ENCODE measurements at regions of chr17 and their contacts with region 1.

Region 1: GRCh38 chr17:38557836-38558727 is 47.7 kb downstream of the SRCIN1 start:
- DNase-seq: peak; percentile 96
- ATAC-seq: peak; percentile 72
- H3K4me3 Mint-ChIP-seq: peak overlapping the region; percentile 90
- H3K27ac Mint-ChIP-seq: no peak overlapping the region; the same call in 1 of the 2 replicates
- H3K4me1 Mint-ChIP-seq: peaks cover 37% of the 10 kb centered on the region
- H3K27me3 Mint-ChIP-seq: peaks cover 58% of the 10 kb centered on the region
- CTCF ChIP-seq: peak; percentile 57; the same call in 1 of the 2 replicates

Region 2: GRCh38 chr17:38454516-38454915 is 103.6 kb before region 1 on chr17:
- CTCF ChIA-PET with region 1: interaction called, 18 read pairs
- POLR2A ChIA-PET with region 1: interaction called, 4 read pairs
- DNase-seq: no peak
- ATAC-seq: no peak
- H3K4me3 Mint-ChIP-seq: peak overlapping the region; percentile 62
- H3K27ac Mint-ChIP-seq: peak overlapping the region; percentile 84
- H3K4me1 Mint-ChIP-seq: peaks cover 65% of the 10 kb centered on the region
- H3K27me3 Mint-ChIP-seq: 0 out of 2 replicates have a peak, but pooled peaks cover 2% of the 10 kb centered on the region
- CTCF ChIP-seq: no peak

Region 3: DNA sequence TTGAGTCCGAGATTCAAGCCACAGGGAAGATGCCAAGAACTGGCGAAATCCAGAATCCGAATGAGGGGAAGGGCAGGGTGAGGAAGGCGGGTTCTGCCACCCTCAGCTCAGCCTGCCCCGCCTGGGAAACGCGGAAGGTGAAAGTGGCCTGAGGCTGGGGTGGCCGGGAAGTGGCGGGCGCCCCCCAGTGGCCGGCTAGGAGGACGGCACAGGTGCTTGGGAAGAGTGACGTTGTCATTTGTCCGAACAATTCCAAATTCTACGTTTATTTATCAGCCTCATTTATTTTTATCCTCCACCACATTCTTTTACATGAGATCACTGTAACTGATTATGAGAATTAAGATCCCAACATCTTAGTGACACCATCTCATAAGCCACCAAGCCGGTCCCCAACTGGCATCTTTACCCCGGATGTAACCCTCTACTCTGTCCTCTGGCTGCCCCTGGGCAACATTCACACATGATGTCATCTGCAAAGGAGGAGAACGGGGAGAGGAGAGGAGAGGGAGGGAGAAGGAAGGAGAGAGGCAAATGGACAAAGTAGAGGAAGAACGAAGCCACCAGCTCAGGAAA is 26.4 kb after region 1 on chr17:
- CTCF ChIA-PET with region 1: interaction called, 242 read pairs
- POLR2A ChIA-PET with region 1: interaction called, 4 read pairs
- DNase-seq: peak; percentile 78
- ATAC-seq: peak; percentile 60
- H3K4me3 Mint-ChIP-seq: 0 out of 2 replicates have a peak overlapping the region, but pooled peaks have one; percentile 14
- H3K27ac Mint-ChIP-seq: peak overlapping the region; percentile 36; the same call in 1 of the 2 replicates
- H3K4me1 Mint-ChIP-seq: peaks cover 59% of the 10 kb centered on the region
- H3K27me3 Mint-ChIP-seq: peaks cover 38% of the 10 kb centered on the region
- CTCF ChIP-seq: peak; percentile 97

Region 4: GRCh38 chr17:38636054-38636453 is 78.0 kb after region 1 on chr17:
- CTCF ChIA-PET with region 1: interaction called, 12 read pairs
- POLR2A ChIA-PET with region 1: no interaction called
- DNase-seq: peak; percentile 75
- ATAC-seq: peak; percentile 81
- H3K4me3 Mint-ChIP-seq: 0 out of 2 replicates have a peak overlapping the region, but pooled peaks have one; percentile 4
- H3K27ac Mint-ChIP-seq: peak overlapping the region; percentile 20; the same call in 1 of the 2 replicates
- H3K4me1 Mint-ChIP-seq: peaks cover 12% of the 10 kb centered on the region
- H3K27me3 Mint-ChIP-seq: peaks cover 4% of the 10 kb centered on the region; the same call in 1 of the 2 replicates
- CTCF ChIP-seq: no peak

Region 5: DNA sequence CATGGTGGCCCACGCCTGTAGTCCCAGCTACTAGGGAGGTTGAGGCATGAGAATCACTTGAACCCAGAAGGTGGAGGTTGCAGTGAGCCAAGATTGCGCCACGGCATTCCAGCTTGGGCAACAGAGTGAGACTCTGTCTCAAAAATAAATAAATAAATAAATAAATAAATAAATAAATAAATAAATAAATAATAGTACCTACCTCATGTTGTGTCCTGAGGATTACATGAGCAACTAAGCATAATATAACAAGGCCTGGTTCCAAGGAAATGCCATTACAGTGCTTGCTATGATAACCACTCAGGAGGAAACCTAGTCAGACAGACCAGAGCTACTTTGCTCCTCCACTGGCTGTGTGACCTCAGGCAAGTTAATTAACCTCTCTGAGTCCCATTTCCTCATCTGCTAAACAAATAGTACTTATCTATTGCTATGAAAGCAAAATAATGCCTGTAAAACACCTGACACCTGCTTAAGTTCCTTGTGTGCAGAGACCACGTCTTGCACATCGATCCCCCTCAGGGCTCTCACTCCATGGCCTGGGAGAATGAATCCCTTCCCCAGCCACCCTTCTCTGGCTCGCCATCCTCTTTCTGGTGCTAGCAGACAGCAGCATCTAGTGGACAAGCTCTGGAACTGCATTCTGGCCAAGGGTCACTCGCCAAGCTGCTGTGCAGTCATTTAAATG is 109.2 kb after region 1 on chr17:
- CTCF ChIA-PET with region 1: interaction called, 501 read pairs
- POLR2A ChIA-PET with region 1: interaction called, 5 read pairs
- DNase-seq: peak; percentile 82
- ATAC-seq: peak; percentile 12; the same call in 1 of the 2 replicates
- H3K4me3 Mint-ChIP-seq: no peak overlapping the region
- H3K27ac Mint-ChIP-seq: no peak overlapping the region
- H3K4me1 Mint-ChIP-seq: peaks cover 52% of the 10 kb centered on the region
- H3K27me3 Mint-ChIP-seq: peaks cover 60% of the 10 kb centered on the region
- CTCF ChIP-seq: peak; percentile 96

Region 6: DNA sequence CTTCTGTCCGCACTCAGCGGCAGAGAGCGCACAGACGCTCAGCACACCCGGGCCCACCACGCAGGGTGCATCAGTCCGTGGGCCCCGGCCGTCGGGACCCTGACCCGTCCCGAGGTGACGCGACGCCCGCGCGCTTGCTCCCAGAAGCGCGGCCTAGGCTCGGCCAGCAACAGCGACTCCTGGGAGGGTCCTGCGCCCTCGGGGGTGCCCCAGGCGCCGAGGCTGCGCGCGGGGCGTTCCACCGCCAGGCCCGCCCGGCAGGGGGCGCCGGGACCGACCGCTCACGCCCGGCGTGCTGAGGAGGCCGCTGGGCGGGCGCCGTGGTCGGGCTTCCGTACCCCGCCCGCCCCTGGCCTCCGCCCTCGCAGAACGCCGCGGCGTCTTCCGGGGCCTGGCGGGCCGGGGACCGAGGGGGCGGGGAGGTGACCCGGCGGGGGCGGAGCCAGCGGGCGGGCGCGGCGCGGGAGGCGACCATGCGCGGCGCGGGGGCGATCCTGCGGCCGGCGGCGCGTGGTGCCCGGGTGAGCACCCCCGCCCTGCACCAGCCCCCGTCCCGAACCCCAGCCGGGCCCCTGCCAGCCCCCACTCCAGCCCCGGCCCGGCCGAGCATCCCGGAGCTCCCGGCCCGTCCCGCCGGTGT is 171.9 kb after region 1 on chr17 and contains the start of gene CISD3:
- CTCF ChIA-PET with region 1: interaction called, 17 read pairs
- POLR2A ChIA-PET with region 1: no interaction called
- DNase-seq: peak; percentile 74
- ATAC-seq: peak; percentile 75
- H3K4me3 Mint-ChIP-seq: peak within 1 kb of the TSS; percentile 94
- H3K27ac Mint-ChIP-seq: peak within 1 kb of the TSS; percentile 88
- H3K4me1 Mint-ChIP-seq: peaks cover 37% of the 10 kb centered on the region
- H3K27me3 Mint-ChIP-seq: peaks cover 23% of the 10 kb centered on the region
- CTCF ChIP-seq: peak; percentile 55; the same call in 1 of the 2 replicates
- total RNA-seq, gene CISD3: 12.1 to 15.7 TPM (median 15.6 TPM) in 3 replicates